Vagina (tissue), 2 donors: ENCODE measurements at regions of chr17 and their contacts with region 1.

Region 1: DNA sequence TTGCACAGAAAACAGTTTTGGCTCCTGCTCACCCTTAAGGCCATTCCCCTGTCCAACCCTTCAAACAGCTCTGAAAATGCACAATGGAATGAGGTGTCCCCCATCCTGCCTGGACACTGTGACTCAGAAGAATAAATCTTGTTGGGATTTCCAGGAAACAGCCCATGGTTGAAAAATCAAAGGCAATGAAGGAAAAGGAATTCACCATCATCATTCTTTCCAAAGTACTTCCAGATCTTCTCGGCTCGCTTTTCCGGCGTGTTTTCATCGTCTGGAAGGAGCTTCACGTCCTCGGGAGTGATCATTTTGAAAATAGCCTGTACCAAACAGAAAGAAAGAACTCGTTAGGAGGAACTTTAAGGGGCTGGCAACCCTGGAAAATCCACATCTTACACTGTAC is 4.3 kb downstream of the RCVRN start:
- DNase-seq: no peak
- H3K4me3 ChIP-seq: no peak overlapping the region
- H3K27ac ChIP-seq: peak overlapping the region; percentile 53
- H3K4me1 ChIP-seq: peaks cover 27% of the 10 kb centered on the region
- H3K27me3 ChIP-seq: no peaks in the 10 kb centered on the region
- CTCF ChIP-seq: no peak
- POLR2A ChIP-seq: no peak

Region 2: GRCh38 chr17:9802305-9803096 is 98.3 kb before region 1 on chr17:
- intact Hi-C with region 1: no loop called
- DNase-seq: no peak
- H3K4me3 ChIP-seq: no peak overlapping the region
- H3K27ac ChIP-seq: no peak overlapping the region
- H3K4me1 ChIP-seq: no peaks in the 10 kb centered on the region
- H3K27me3 ChIP-seq: no peaks in the 10 kb centered on the region
- CTCF ChIP-seq: no peak
- POLR2A ChIP-seq: no peak

Region 3: DNA sequence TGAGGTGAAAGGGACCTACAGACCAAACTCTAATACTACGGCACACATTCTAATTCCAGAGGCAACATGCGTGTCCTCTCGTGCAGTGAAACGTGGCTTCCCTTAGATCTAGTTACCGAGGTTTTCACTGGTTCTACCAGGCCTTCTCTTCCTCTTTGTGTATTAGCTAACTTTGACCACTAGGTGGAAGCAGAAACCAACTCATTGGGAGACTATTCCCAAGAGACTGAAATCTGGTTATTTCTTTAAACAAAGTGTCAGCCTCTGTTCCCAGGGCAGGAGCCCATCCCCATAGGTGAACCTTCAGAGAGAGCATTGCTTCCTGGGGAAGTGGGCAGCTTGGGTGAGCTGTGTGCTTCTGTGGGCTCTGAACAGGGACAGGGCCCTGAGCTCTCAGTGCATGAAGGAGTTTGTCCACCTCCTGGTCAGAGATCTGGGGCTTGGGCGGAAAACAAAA is 24.0 kb after region 1 on chr17:
- intact Hi-C with region 1: loop called (anchors 1 kb)
- DNase-seq: peak in 1 of 2 donors; percentile 84
- H3K4me3 ChIP-seq: no peak overlapping the region
- H3K27ac ChIP-seq: peak overlapping the region; percentile 52
- H3K4me1 ChIP-seq: no peaks in the 10 kb centered on the region
- H3K27me3 ChIP-seq: no peaks in the 10 kb centered on the region
- CTCF ChIP-seq: peak; percentile 54 to 92 (median 67)
- POLR2A ChIP-seq: no peak